ENCODE measurements at regions of chr11 and their contacts with region 1.

Region 1: DNA sequence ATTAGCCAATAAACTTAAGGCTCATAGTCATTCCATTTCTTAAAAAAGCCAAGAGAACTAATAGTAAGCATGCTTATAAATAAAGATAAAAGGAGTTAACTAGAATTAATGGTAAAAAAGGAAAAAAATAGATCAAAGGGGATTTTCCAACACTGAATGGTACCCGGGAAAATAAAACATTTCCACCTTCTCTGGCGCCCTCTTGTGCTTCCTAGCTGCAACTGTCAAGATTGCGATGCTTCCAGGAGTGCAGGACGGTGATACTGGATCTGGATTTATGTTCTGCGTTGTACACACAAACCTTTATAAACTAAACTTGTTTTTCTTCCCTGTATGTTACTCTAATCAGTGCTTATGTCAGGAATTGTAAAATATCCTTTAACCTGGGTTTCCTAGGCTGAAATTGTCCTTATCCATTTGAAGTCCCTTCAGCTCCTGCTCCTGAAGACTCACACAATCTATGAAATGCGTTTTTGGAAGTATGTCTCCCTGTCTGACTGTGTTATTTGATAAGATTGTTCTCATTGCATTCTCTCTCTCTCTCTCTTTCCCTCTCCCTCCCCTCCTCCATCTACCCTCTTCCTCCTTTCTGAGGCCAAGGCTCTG is 9.6 kb upstream of the HTATIP2 start:
- DNase-seq: no peak
- H3K4me3 ChIP-seq: no peak overlapping the region
- H3K27ac ChIP-seq: no peak overlapping the region
- H3K4me1 ChIP-seq: no peaks in the 10 kb centered on the region
- H3K27me3 ChIP-seq: no peaks in the 10 kb centered on the region
- CTCF ChIP-seq: peak; percentile 87

Region 2: DNA sequence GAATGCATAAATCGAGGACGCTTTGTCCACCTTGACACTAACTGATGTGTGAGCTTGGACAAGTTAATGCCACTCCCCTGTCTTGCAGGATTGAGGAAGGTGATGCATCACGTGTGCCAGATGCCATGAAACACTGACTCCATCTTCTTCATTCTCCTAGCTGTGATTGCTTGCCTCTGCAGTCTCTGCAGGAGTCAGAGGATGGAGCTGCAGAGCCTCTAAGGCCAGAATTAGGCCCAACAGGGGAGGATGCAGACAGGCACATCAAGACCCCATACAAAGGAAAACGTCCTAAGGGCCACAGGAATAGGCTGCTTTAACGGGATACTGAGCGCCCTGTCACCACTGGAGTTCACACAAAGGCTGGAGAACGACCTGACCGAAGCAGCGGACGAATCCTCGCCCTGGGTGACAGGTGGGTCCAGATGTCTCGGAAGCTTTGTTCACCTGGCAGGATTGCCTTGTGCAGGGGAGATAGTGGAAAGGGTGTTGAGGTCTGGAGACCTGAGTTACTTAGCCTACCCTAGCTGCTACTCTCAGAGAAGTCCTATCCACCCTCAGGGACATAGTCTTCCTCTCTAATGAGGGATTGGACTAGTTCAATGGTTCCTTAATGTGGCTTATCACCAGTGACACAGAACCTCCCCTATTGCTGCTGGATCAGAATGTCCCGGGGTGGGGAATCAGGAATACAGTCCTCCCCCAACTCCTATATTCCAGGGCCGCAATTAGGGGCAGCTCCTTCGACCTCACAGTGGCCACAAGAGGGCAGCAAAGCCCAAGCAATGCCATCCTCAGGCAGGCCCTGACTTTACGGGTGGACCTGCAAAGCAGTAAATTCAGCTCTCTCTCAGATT is 226.0 kb before region 1 on chr11:
- intact Hi-C with region 1: loop called (anchors 5 kb)
- DNase-seq: peak; percentile 64
- H3K4me3 ChIP-seq: no peak overlapping the region
- H3K27ac ChIP-seq: no peak overlapping the region
- H3K4me1 ChIP-seq: peaks cover 12% of the 10 kb centered on the region
- H3K27me3 ChIP-seq: peaks cover 4% of the 10 kb centered on the region
- CTCF ChIP-seq: peak; percentile 85

Region 3: DNA sequence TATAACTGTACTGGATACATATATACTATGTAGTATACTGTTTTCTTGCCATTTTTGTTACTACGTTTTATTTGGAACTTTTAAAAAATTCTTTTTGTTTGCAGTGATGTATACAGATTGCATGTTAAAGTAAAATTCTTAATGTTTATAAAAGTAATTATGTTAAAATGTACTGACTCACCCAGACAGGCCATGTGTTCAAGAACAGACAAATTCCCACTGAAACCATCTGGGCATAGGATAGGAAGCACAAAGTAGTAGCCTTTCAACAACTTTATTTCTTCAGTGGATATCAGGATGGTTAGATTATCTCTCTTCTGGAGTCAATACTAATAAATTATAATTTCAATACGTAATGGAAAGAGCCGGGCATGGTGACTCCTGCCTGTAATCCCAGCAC is 53.4 kb after region 1 on chr11:
- intact Hi-C with region 1: no loop called
- DNase-seq: no peak
- H3K4me3 ChIP-seq: no peak overlapping the region
- H3K27ac ChIP-seq: no peak overlapping the region
- H3K4me1 ChIP-seq: no peaks in the 10 kb centered on the region
- H3K27me3 ChIP-seq: no peaks in the 10 kb centered on the region
- CTCF ChIP-seq: no peak

Region 4: DNA sequence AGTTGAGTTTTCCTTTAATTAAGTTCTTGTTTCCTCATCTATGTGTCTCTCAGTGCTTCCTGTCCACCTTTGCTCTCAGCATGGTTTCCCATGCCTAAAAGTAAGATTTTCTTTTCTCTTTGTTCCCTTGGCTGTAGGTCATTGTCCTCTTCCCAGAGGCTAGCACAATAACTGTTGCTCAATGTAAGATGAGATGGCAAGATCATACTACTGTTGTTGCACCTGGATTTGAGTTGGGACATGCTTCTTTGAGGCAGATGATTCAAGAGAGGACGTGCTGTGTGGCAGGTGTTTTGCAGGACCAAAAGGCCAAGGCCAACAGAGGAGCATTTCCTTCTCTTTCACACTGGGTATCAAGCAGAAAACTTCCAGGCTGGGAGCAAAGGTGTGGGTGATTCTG is 304.2 kb after region 1 on chr11:
- intact Hi-C with region 1: no loop called
- DNase-seq: no peak
- H3K4me3 ChIP-seq: no peak overlapping the region
- H3K27ac ChIP-seq: no peak overlapping the region
- H3K4me1 ChIP-seq: no peaks in the 10 kb centered on the region
- H3K27me3 ChIP-seq: peaks cover 52% of the 10 kb centered on the region
- CTCF ChIP-seq: no peak